ENCODE measurements at regions of chr12 and their contacts with region 1.

Region 1: DNA sequence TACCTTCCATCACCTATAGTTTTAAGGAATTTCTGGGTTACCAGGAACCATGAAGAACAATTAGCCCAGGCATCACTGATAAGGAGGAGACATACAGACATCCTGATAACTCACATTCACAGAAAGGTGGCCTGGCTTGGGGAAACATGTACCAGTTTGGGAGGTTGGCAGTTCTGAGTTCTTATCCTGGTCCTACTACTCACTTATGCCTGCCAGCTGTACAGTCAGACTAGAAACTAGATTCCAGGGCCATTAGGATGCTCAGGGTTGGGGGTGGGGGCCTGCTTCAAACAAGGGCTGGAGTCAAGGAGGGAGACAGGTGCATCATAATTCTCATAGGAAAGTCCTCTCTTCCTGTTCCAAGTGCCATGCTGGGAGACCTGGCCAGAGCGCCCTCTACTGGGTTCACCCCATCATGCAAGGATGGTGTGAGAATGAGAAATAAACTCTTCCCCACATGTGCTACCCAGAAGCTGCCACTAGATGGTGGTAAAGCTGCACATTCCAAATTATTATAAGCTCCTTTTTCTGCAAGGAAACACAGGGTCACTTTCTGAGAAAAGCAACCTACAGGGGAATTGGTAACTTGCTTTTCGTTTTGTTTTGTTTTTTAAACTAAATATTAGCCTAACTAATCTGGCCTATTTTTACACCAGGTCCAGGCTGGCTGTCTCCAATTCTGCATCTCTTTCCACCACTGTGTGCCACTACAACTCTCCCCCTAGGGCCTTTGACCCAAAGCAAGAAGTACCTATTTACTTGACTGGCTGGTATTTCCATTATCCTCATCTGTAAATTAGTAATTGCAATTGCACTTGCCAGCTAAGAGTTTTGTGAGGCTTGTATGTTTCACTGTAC is 14.5 kb downstream of the OAS2 start:
- DNase-seq: peak; percentile 86
- H3K4me3 ChIP-seq: no peak overlapping the region
- H3K27ac ChIP-seq: no peak overlapping the region
- H3K4me1 ChIP-seq: no peaks in the 10 kb centered on the region
- H3K27me3 ChIP-seq: no peaks in the 10 kb centered on the region
- CTCF ChIP-seq: peak; percentile 99

Region 2: GRCh38 chr12:112577473-112578329 is 415.1 kb before region 1 on chr12:
- CTCF ChIA-PET with region 1: no interaction called
- POLR2A ChIA-PET with region 1: no interaction called
- intact Hi-C with region 1: no loop called
- DNase-seq: peak; percentile 24
- H3K4me3 ChIP-seq: no peak overlapping the region
- H3K27ac ChIP-seq: no peak overlapping the region
- H3K4me1 ChIP-seq: no peaks in the 10 kb centered on the region
- H3K27me3 ChIP-seq: no peaks in the 10 kb centered on the region
- CTCF ChIP-seq: no peak

Region 3: DNA sequence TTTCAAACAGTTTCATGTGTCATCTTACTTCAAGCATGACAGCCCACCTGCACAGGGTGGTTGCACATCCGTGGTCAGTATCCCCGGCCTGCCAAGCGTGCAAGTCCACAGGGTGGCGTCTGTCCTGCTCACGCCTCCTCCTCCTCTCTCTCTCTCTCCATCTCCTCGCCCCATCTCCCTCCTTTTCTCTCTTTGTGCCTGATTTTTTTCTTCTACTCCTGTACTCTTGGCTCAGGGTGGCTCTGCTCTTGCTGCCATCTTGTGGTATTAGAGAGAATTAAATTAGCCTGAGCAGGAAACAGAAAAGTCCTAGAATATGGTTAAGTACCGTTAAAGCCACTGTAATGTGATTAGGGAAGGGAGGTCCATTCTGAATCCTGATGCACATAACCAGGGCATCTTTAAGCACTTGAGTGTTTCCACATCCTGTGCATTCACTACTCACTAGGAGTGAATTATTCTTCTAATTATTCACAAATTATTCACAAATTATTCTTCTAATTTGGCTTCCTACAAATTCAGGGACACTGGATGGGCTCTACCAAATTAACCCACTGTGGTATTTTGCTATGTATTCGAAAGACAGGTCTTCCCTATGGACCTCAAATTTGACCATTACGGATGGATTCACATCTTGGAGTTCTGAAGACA is 38.2 kb after region 1 on chr12:
- CTCF ChIA-PET with region 1: interaction called, 14 read pairs
- POLR2A ChIA-PET with region 1: no interaction called
- intact Hi-C with region 1: loop called (anchors 2 kb)
- DNase-seq: peak; percentile 88
- H3K4me3 ChIP-seq: no peak overlapping the region
- H3K27ac ChIP-seq: no peak overlapping the region
- H3K4me1 ChIP-seq: no peaks in the 10 kb centered on the region
- H3K27me3 ChIP-seq: no peaks in the 10 kb centered on the region
- CTCF ChIP-seq: peak; percentile 82

Region 4: GRCh38 chr12:113152835-113153814 is 160.4 kb after region 1 on chr12:
- CTCF ChIA-PET with region 1: interaction called, 15 read pairs
- POLR2A ChIA-PET with region 1: no interaction called
- intact Hi-C with region 1: loop called (anchors 10 kb)
- DNase-seq: peak; percentile 82
- H3K4me3 ChIP-seq: peak overlapping the region; percentile 44
- H3K27ac ChIP-seq: no peak overlapping the region
- H3K4me1 ChIP-seq: peaks cover 17% of the 10 kb centered on the region
- H3K27me3 ChIP-seq: peaks cover 5% of the 10 kb centered on the region
- CTCF ChIP-seq: peak; percentile 64

Measured in A673 (cell line).